Activated CD4-positive, alpha-beta T cell treated with anti-CD3 and anti-CD28 coated beads, Interleukin-2, amount 10 ng/mL, durations not matched to agents 24 days and 14 days (primary cell): ENCODE measurements at regions of chr14 and their contacts with region 1.

Region 1: DNA sequence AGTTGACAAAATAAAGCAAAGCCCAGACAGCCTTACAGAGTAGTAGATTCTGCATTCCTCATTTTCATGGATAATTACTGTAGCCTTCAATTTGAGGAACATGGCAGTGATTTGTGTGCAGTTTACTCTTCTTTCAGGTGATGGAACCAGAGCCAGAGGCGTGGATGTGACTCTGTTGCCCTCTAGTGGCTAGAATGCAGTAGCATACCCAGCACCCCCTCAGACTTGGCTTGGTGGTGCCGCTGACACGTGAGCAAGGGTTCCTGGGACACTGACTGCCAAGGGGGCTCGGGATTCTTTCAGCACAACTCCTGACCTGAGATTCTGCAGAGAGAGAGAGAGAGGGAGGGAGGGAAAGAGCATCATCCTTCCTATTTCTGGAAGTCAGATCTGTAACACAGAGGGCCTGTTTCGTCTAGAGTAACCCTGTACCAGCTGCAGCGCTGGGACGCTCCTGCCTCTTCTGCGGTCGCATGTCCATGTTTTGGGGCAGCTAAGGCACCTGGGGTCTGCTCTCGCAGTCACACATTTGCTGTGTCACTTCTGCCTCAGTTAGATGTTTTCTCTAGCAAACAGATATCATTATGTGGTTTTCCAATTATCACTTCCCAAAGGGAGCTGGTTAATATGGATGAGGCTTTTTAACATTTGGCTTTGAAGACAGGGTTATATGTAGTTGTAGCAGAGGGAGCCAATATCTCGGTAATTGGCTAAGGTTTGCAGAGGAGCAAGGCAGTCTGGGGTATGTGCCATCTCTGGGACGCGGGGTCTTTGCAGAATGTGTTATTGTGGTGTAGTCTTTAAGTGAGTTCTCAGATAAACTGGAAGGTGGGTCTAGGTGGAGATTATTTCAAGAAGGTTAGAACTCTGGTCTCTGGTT is 428.1 kb downstream of the NRXN3 start:
- DNase-seq: peak; percentile 78
- H3K4me3 Mint-ChIP-seq: no peak overlapping the region
- H3K27ac Mint-ChIP-seq: no peak overlapping the region
- H3K4me1 Mint-ChIP-seq: no peaks in the 10 kb centered on the region
- H3K27me3 Mint-ChIP-seq: no peaks in the 10 kb centered on the region

Region 2: DNA sequence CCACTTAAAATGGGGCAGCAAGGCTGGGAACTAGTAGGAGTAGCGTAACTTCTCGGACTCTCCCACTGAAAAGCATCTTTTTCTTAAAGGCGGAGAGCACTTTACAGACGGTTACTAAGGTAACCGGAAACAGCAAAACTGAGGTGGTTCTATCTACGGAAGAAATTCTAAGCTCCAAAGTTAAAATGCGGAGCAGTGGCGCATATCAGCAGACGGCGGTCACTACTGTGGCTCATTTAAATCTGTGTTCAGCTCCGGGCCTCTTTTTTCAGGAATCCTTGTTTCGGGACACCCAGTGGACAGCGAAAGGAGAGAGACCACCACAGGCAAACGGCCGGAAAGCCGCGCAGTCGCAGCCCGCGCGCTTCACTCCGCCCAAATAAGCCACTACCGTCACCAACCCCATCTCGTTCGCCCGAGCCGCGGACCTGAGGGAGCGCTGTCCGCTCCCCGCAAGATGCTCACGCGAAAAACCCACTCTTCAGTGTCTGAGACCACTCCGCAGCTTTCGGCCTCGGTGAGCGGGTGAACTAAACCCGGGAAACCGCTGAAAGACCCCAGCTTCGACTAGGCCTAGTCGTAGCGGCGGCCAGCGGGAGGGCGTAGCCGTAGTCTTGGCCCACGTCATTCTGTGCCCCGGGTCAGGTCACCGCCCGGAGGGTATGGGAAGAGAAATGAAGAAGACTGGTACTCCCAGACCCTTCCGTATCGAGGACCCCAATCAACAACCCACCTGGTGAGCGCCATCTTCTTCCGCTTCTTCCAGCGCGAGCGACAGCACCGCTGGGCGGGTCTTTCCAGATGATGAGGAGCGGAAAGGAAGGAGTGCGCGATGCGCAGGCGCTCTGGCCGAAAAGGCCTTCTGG is 837.7 kb before region 1 on chr14 and contains the start of gene SNW1:
- intact Hi-C with region 1: loop called (anchors 10 kb)
- DNase-seq: peak; percentile 97
- H3K4me3 Mint-ChIP-seq: peak within 1 kb of the TSS; percentile 94
- H3K27ac Mint-ChIP-seq: peak within 1 kb of the TSS; percentile 99
- H3K4me1 Mint-ChIP-seq: peaks cover 25% of the 10 kb centered on the region
- H3K27me3 Mint-ChIP-seq: peaks cover 6% of the 10 kb centered on the region
- total RNA-seq, gene SNW1: 121 TPM in 2 replicates

Region 3: GRCh38 chr14:78022059-78022458 is 576.2 kb before region 1 on chr14:
- intact Hi-C with region 1: loop called (anchors 2 kb)
- DNase-seq: peak; percentile 87
- H3K4me3 Mint-ChIP-seq: no peak overlapping the region
- H3K27ac Mint-ChIP-seq: no peak overlapping the region
- H3K4me1 Mint-ChIP-seq: no peaks in the 10 kb centered on the region
- H3K27me3 Mint-ChIP-seq: peaks cover 3% of the 10 kb centered on the region

Region 4: GRCh38 chr14:78448164-78449094 is 149.9 kb before region 1 on chr14:
- intact Hi-C with region 1: loop called (anchors 2 kb)
- DNase-seq: peak; percentile 84
- H3K4me3 Mint-ChIP-seq: no peak overlapping the region
- H3K27ac Mint-ChIP-seq: no peak overlapping the region
- H3K4me1 Mint-ChIP-seq: no peaks in the 10 kb centered on the region
- H3K27me3 Mint-ChIP-seq: no peaks in the 10 kb centered on the region

Region 5: GRCh38 chr14:78498062-78498595 is 100.2 kb before region 1 on chr14:
- intact Hi-C with region 1: no loop called
- DNase-seq: no peak
- H3K4me3 Mint-ChIP-seq: no peak overlapping the region
- H3K27ac Mint-ChIP-seq: no peak overlapping the region
- H3K4me1 Mint-ChIP-seq: no peaks in the 10 kb centered on the region
- H3K27me3 Mint-ChIP-seq: no peaks in the 10 kb centered on the region

Region 6: GRCh38 chr14:78581229-78581628 is 17.1 kb before region 1 on chr14:
- intact Hi-C with region 1: no loop called
- DNase-seq: no peak
- H3K4me3 Mint-ChIP-seq: no peak overlapping the region
- H3K27ac Mint-ChIP-seq: no peak overlapping the region
- H3K4me1 Mint-ChIP-seq: no peaks in the 10 kb centered on the region
- H3K27me3 Mint-ChIP-seq: no peaks in the 10 kb centered on the region